IMR-90 (cell line): ENCODE measurements at regions of chr2 and their contacts with region 1.

Region 1: DNA sequence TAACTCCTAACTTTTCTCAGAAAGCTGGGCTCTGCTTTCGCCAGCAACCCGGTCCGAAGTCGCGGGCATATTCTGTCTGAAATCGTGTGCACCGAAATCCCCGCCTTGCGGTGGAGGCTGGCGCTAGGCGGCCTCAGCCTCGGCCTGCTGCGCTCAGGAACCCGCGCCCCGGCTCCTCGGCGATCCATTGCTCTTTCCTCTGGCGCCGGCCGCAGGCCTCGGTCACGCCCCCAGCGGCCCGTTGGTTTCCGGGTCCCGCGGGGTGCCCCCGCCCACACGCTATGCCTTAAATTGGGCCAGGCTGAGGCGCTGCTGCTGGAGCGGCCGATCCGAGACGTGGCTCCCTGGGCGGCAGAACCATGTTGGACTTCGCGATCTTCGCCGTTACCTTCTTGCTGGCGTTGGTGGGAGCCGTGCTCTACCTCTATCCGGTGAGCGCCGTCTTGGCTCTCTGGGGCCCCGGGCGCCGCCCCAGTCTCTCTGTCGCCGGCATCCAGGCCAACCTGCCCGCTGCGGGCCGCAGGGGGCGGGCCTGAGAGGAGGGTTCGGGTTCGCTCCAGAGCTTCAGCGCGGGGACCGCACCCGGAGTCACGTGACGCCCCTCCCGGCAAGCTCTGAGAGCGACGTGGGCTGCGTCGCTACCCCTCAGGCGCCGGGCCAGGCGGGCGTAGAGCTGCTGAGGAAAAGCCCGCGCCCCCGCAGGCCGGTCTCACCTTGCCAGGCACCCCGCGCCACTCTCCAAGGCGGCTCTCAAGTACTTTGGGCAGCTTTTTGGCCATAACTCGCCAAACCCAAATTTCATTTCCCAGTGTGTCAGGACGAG is at the start of gene CYP20A1:
- DNase-seq: peak; percentile 94
- ATAC-seq: peak; percentile 97
- H3K4me3 ChIP-seq: peak within 1 kb of the TSS; percentile 64
- H3K27ac ChIP-seq: peak within 1 kb of the TSS; percentile 91
- H3K4me1 ChIP-seq: peaks cover 3% of the 10 kb centered on the region; the same call in 1 of the 2 replicates
- H3K27me3 ChIP-seq: no peaks in the 10 kb centered on the region
- CTCF ChIP-seq: peak; percentile 43
- POLR2A ChIP-seq: peak; percentile 96
- RAD21 ChIP-seq: peak; percentile 35
- total RNA-seq, gene CYP20A1: 16.8 and 26.9 TPM in 2 replicates

Region 2: DNA sequence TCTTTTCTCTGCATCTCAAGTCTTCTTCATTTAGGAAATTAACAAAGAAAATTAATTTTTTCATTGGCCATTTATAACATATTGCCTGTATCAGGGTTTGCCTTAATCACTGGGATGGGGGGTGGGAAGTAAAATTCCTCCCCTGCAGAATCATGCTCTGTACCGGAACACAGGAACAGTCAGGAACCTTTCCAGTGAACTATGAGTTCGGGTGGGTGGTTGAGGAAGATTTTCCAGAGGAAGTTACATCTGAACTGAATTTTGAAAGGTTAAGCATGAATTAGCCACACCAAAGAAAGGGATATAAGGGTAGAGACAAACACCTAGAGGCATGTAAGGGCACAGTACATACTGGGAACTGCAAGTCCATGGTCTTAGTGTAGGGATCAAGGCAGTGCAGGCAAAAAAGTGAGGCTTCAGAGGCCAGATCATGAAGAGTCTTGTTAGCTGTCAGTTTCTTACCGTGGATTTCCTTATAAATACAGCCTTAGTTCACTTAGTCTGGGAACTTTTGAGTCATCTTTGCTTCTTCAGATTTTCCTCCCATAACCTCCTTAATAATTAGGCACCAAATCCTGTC is 548.5 kb before region 1 on chr2:
- CTCF ChIA-PET with region 1: no interaction called
- POLR2A ChIA-PET with region 1: no interaction called
- dilution Hi-C with region 1: no loop called
- in situ Hi-C with region 1: no loop called
- intact Hi-C with region 1: no loop called
- DNase-seq: no peak
- ATAC-seq: no peak
- H3K4me3 ChIP-seq: no peak overlapping the region
- H3K27ac ChIP-seq: no peak overlapping the region
- H3K4me1 ChIP-seq: peaks cover 3% of the 10 kb centered on the region; the same call in 1 of the 2 replicates
- H3K27me3 ChIP-seq: no peaks in the 10 kb centered on the region
- CTCF ChIP-seq: no peak
- POLR2A ChIP-seq: no peak
- RAD21 ChIP-seq: no peak

Region 3: DNA sequence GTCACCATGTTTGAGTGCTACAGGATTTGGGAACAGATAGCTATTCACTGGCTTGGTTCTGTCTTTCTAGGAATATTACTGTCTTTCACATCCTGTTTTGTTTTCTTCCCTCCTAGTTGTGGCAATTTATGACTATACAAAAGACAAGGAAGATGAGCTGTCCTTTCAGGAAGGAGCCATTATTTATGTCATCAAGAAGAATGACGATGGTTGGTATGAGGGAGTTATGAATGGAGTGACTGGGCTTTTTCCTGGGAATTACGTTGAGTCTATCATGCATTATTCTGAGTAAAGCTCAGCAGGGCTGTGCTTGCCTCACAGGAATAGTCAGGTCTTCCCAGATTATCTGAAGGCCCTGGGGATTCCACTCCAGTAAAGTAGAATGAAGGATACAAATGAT is 188.1 kb after region 1 on chr2:
- CTCF ChIA-PET with region 1: no interaction called
- POLR2A ChIA-PET with region 1: no interaction called
- dilution Hi-C with region 1: no loop called
- in situ Hi-C with region 1: no loop called
- intact Hi-C with region 1: no loop called
- DNase-seq: peak; percentile 49
- ATAC-seq: peak; percentile 32; the same call in 1 of the 2 replicates
- H3K4me3 ChIP-seq: no peak overlapping the region
- H3K27ac ChIP-seq: no peak overlapping the region
- H3K4me1 ChIP-seq: no peaks in the 10 kb centered on the region
- H3K27me3 ChIP-seq: no peaks in the 10 kb centered on the region
- CTCF ChIP-seq: no peak
- POLR2A ChIP-seq: no peak
- RAD21 ChIP-seq: no peak

Region 4: GRCh38 chr2:205128726-205129125 is 1889.8 kb after region 1 on chr2:
- CTCF ChIA-PET with region 1: no interaction called
- POLR2A ChIA-PET with region 1: interaction called, 11 read pairs
- dilution Hi-C with region 1: no loop called
- in situ Hi-C with region 1: no loop called
- intact Hi-C with region 1: no loop called
- DNase-seq: no peak
- ATAC-seq: no peak
- H3K4me3 ChIP-seq: no peak overlapping the region
- H3K27ac ChIP-seq: no peak overlapping the region
- H3K4me1 ChIP-seq: no peaks in the 10 kb centered on the region; the same call in 1 of the 2 replicates
- H3K27me3 ChIP-seq: no peaks in the 10 kb centered on the region
- CTCF ChIP-seq: no peak
- POLR2A ChIP-seq: no peak
- RAD21 ChIP-seq: no peak